Stomach (tissue), 19 donors: ENCODE measurements at regions of chr16 and their contacts with region 1.

Region 1: DNA sequence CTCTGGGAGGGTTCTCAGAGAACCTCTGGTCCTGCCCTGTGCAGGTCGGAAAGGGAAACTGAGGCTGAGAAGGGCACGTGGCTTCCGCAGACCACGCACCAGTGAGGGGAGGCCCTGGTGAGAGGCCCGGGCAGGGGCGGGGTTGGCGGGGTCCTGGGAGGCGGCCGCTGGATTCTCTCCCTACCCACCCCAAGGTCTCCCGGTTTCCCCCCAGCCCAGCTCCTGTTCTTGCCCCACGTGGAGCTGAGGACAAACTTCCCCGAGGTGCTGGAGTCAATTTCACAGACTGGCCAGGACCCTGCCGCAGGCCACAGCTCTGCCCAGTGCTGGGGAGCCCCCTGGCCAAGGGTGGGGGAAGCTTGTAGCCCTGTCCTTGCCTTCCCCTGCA is 11.5 kb downstream of the CCL17 start:
- DNase-seq: no peak
- H3K4me3 ChIP-seq: peak overlapping the region in 1 of 4 donors; percentile 16
- H3K27ac ChIP-seq: peak overlapping the region in 1 of 5 donors; percentile 32
- H3K4me1 ChIP-seq: peaks cover 11 to 35% (median 28%) of the 10 kb centered on the region in 4 donors
- H3K27me3 ChIP-seq: peaks cover 0 to 4% (median 0%) of the 10 kb centered on the region in 3 donors
- CTCF ChIP-seq: no peak
- EP300 ChIP-seq: no peak
- POLR2A ChIP-seq: no peak

Region 2: GRCh38 chr16:57300387-57301125 is 115.6 kb before region 1 on chr16:
- intact Hi-C with region 1: loop called (anchors 2 kb)
- DNase-seq: peak; percentile 99 to 100
- H3K4me3 ChIP-seq: peak overlapping the region; percentile 35 to 43 (median 42)
- H3K27ac ChIP-seq: peak overlapping the region; percentile 83 to 93 (median 92)
- H3K4me1 ChIP-seq: peaks cover 25 to 53% (median 38%) of the 10 kb centered on the region in 4 donors
- H3K27me3 ChIP-seq: no peaks in the 10 kb centered on the region
- CTCF ChIP-seq: peak in 6 of 7 experiments; percentile 66 to 100 (median 94)
- EP300 ChIP-seq: no peak
- POLR2A ChIP-seq: no peak